Astrocyte of the cerebellum (primary cell): ENCODE measurements at regions of chr6 and their contacts with region 1.

Region 1: DNA sequence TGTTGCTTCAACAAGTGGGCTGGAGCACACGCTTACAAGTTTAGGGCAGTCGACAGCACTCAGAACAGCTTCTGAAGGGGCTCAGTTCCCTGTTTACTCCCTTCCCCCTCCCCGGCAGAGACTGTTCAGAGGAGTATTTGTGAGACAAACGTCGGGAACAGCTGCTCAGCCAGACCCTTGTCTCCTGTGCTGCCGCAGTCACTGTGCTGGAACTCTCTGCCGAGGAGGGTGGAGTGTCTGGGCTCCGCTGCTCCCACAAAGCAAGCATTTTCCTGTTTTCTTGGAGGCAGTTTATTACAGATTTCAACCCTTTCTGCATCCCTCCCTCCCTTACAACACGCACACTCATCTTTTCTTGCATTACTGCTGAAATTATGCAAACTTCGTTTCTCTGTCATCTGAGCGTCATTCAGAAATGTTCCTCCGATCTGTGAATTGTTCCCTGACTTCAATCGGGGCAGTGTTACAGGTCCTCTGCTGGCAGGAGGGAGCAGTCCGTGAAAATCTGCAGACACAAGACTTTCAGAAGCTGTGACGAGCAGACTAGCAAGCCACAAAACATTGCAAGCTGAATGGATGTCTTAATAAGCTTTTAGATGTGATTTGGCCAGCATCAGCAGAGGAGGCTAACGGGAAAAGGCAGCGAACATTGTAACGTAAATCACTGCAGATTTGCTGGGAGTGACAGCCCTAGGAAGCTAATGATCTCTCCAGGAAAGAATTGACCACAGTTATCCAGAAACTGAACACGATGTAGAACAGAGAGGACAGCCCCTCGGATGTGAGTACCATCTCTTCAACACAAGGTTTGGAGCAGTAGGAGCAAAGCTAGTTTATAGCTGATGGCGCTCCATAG is 76.2 kb downstream of the LYRM2 start:
- DNase-seq: no peak
- H3K4me3 ChIP-seq: no peak overlapping the region
- CTCF ChIP-seq: no peak

Region 2: GRCh38 chr6:89509766-89510281 is 52.5 kb before region 1 on chr6:
- in situ Hi-C with region 1: no loop called
- DNase-seq: no peak
- H3K4me3 ChIP-seq: no peak overlapping the region
- CTCF ChIP-seq: no peak

Region 3: DNA sequence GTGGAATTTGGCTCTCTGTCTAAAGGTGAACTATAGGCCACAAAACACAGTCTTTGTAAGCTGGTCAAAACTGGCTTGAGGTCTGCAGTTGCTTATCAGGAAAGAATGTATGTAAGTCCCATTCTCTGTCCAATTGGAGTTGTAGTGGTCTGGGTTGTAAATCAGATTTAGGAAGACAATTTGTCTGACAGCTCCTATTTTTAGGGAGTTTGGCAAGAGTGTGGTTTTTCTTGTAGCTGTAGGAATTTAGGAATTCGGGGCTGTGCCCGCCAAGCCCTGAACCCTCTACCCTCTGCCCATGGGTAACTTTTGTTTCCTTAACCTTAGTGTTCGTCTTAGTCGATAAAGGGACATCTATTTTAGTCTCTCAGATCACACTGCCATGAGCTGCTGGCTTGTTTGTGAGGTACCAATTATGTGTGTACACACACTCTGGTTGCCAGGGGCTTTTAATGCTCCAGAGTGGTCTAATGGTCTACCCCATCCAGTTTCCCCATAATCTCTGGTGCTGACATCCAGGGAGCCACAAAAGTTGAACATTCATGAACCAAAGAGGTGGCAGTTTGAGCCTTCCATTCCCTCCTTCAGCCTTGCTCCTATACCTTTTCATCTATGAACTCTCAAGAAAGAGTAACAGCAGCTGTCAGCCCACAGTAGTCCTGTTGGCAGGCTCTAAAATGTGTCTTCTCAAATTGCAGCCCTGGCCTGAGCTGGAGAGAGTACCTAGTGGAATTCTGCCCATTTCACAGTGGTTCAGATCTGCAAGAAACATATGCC is 36.4 kb before region 1 on chr6:
- in situ Hi-C with region 1: no loop called
- DNase-seq: no peak
- H3K4me3 ChIP-seq: no peak overlapping the region
- CTCF ChIP-seq: no peak

Region 4: DNA sequence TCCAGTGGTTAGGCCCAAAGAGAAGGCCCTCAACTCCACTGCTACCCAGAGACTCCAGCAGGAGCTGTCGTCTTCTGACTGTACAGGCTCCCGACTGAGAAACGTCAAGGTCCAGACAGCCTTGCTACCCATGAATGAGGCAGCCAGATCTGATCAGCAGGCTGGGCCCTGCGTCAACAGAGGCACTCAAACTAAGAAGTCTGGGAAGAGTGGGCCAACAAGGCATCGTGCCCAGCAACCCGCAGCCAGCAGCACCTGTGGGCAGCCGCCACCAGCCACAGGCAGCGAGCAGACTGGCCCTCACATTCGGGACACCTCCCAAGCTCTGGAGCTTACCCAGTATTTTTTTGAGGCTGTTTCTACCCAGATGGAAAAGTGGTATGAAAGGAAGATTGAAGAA is 68.1 kb after region 1 on chr6:
- in situ Hi-C with region 1: loop called (anchors 5 kb)
- DNase-seq: no peak
- H3K4me3 ChIP-seq: no peak overlapping the region
- CTCF ChIP-seq: no peak

Region 5: GRCh38 chr6:89805814-89806371 is 243.5 kb after region 1 on chr6:
- in situ Hi-C with region 1: no loop called
- DNase-seq: no peak
- H3K4me3 ChIP-seq: no peak overlapping the region
- CTCF ChIP-seq: no peak